ENCODE measurements at regions of chr10 and their contacts with region 1.

Region 1: DNA sequence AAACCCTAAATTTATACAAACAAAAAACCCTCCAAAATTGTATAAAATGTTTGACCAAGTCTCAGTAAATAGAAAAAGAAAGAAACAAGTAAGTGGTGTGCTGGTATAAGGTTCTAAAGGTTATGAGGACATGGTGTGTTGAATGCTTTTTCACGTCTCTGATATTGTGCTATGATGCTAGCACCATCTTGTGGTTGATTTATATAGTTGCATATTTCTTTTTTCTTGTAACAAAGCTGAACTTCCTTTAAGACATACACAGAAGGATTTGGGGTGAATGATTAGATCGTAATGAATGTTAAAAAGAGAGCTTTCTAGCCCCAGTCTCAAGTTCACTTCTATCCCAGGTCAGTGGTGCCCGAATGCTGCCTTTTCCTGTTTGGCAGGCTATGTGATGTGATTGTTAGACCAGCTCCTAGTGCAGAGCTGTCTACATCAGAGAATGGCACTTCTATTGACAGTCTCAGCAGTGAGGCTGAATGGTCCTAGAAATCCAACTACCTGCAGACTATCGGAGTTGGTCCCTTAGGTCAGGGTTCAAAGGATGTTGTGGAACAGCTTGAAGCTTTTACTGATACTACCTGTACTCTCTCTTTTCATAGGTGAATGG is 25.0 kb downstream of the VTI1A start:
- DNase-seq: peak in 6 of 9 donors; percentile 8 to 50 (median 34)
- ATAC-seq: peak; percentile 82
- H3K4me3 ChIP-seq: no peak overlapping the region
- H3K4me3 Mint-ChIP-seq: no peak overlapping the region
- H3K27ac ChIP-seq: no peak overlapping the region
- H3K27ac Mint-ChIP-seq: peak overlapping the region in 2 of 9 donors; percentile 3 to 56
- H3K4me1 ChIP-seq: no peaks in the 10 kb centered on the region
- H3K4me1 Mint-ChIP-seq: peaks cover 4 to 27% (median 11%) of the 10 kb centered on the region in 7 donors
- H3K27me3 ChIP-seq: no peaks in the 10 kb centered on the region
- H3K27me3 Mint-ChIP-seq: no peaks in the 10 kb centered on the region

Region 2: GRCh38 chr10:112140110-112140970 is 331.6 kb before region 1 on chr10:
- CTCF ChIA-PET with region 1: interaction called, 3 read pairs
- POLR2A ChIA-PET with region 1: no interaction called
- intact Hi-C with region 1: loop called in 1 of 2 experiments (anchors 5 kb)
- DNase-seq: peak; percentile 15 to 72 (median 43)
- ATAC-seq: peak; percentile 87
- H3K4me3 ChIP-seq: no peak overlapping the region
- H3K4me3 Mint-ChIP-seq: no peak overlapping the region
- H3K27ac ChIP-seq: no peak overlapping the region
- H3K27ac Mint-ChIP-seq: no peak overlapping the region
- H3K4me1 ChIP-seq: no peaks in the 10 kb centered on the region
- H3K4me1 Mint-ChIP-seq: peaks cover 0 to 4% (median 0%) of the 10 kb centered on the region in 7 donors
- H3K27me3 ChIP-seq: no peaks in the 10 kb centered on the region
- H3K27me3 Mint-ChIP-seq: peaks cover 0 to 9% (median 0%) of the 10 kb centered on the region in 5 donors

Region 3: GRCh38 chr10:112434988-112435619 is 36.9 kb before region 1 on chr10:
- CTCF ChIA-PET with region 1: no interaction called
- POLR2A ChIA-PET with region 1: no interaction called
- intact Hi-C with region 1: loop called in 1 of 2 experiments (anchors 5 kb)
- DNase-seq: peak in 2 of 9 donors; percentile 5 to 27
- ATAC-seq: no peak
- H3K4me3 ChIP-seq: no peak overlapping the region
- H3K4me3 Mint-ChIP-seq: no peak overlapping the region
- H3K27ac ChIP-seq: no peak overlapping the region
- H3K27ac Mint-ChIP-seq: peak overlapping the region in 1 of 9 donors; percentile 78
- H3K4me1 ChIP-seq: no peaks in the 10 kb centered on the region
- H3K4me1 Mint-ChIP-seq: peaks cover 0 to 5% (median 3%) of the 10 kb centered on the region in 7 donors
- H3K27me3 ChIP-seq: no peaks in the 10 kb centered on the region
- H3K27me3 Mint-ChIP-seq: no peaks in the 10 kb centered on the region

Region 4: DNA sequence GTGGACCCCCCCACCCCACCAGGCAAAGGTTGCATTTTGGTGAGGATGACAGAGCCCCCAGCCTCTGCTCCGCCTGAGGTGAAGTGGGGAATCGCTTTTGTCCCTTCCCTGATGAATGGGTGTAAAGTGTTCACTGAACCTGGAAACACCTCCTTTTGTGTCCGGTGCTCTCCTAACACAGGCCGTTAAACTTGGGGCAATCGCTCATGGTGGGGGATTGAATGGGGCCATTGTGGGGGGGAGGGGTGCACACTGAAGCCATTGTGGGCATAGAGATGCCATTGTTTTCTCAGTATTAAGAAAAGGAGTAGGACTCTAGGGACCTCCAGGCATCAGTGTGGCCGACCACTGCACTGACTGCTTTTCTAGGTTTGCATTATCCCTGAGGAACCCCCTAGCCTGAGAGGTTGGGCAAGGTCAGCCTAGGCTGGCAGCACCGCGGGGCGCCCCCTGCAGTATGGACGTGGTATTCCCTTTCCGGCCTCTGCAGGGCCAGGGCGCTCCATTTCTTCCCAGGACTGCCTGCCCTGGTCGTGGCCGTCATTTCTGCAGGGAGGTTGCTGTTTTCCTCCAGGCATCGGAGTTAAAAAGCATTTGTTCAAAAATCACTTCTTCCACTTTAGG is 636.3 kb after region 1 on chr10:
- CTCF ChIA-PET with region 1: no interaction called
- POLR2A ChIA-PET with region 1: no interaction called
- intact Hi-C with region 1: loop called in 1 of 2 experiments (anchors 5 kb)
- DNase-seq: peak in 3 of 9 donors; percentile 7 to 35 (median 10)
- ATAC-seq: peak; percentile 53
- H3K4me3 ChIP-seq: no peak overlapping the region
- H3K4me3 Mint-ChIP-seq: no peak overlapping the region
- H3K27ac ChIP-seq: no peak overlapping the region
- H3K27ac Mint-ChIP-seq: no peak overlapping the region
- H3K4me1 ChIP-seq: no peaks in the 10 kb centered on the region
- H3K4me1 Mint-ChIP-seq: no peaks in the 10 kb centered on the region
- H3K27me3 ChIP-seq: no peaks in the 10 kb centered on the region
- H3K27me3 Mint-ChIP-seq: peaks cover 0 to 17% (median 6%) of the 10 kb centered on the region in 5 donors

Region 5: GRCh38 chr10:113521123-113521795 is 1049.3 kb after region 1 on chr10:
- CTCF ChIA-PET with region 1: no interaction called
- POLR2A ChIA-PET with region 1: no interaction called
- intact Hi-C with region 1: loop called in 1 of 2 experiments (anchors 10 kb)
- DNase-seq: peak in 1 of 9 donors; percentile 2
- ATAC-seq: peak; percentile 40
- H3K4me3 ChIP-seq: no peak overlapping the region
- H3K4me3 Mint-ChIP-seq: no peak overlapping the region
- H3K27ac ChIP-seq: no peak overlapping the region
- H3K27ac Mint-ChIP-seq: peak overlapping the region in 1 of 9 donors; percentile 16
- H3K4me1 ChIP-seq: no peaks in the 10 kb centered on the region
- H3K4me1 Mint-ChIP-seq: no peaks in the 10 kb centered on the region
- H3K27me3 ChIP-seq: no peaks in the 10 kb centered on the region
- H3K27me3 Mint-ChIP-seq: peaks cover 0 to 14% (median 13%) of the 10 kb centered on the region in 5 donors

Measured in naive thymus-derived CD4-positive, alpha-beta T cell (primary cell).